ENCODE measurements at regions of chr16 and their contacts with region 1.

Region 1: DNA sequence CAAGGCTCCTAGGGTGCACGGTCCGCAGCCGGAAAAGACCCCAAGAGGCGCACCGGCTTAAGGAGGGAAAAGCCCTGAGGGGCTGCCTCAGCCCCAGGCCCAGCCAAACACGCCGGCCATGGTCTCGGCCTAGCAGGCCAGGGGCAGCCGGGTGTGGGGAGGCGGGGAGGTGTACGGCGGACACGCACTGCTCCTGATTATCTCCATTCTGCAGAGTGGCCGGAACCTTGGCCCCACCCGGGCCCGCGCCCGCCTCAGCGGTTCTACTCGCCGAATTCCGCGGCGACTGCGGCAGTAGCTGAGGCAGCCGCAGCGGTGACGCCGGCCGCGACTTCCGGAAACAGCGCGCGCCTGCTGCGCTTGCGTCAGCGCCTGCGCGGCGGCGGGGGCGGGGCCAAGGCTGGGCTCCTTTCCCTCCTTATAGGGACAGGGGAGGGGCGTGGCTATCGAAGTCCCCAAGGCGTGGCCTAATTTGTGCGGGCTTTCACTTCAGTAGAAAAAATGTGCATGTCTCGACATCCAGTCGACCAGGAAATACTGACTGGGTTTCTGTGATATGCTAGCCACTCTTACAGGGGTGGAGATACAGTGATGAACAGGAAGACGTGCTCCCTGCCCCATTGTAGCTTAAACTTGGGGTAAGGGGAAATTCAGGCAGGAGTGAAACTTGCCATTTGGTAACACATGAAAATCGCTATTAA is at the start of gene PARN:
- H3K4me3 ChIP-seq: peak within 1 kb of the TSS; percentile 71
- H3K27ac ChIP-seq: peak within 1 kb of the TSS; percentile 77
- H3K4me1 ChIP-seq: 0 out of 2 replicates have a peak, but pooled peaks cover 4% of the 10 kb centered on the region
- CTCF ChIP-seq: no peak

Region 2: GRCh38 chr16:14572535-14572934 is 57.5 kb before region 1 on chr16:
- CTCF ChIA-PET with region 1: no interaction called
- POLR2A ChIA-PET with region 1: no interaction called
- H3K4me3 ChIP-seq: no peak overlapping the region
- H3K27ac ChIP-seq: no peak overlapping the region
- H3K4me1 ChIP-seq: no peaks in the 10 kb centered on the region
- CTCF ChIP-seq: no peak

Region 3: DNA sequence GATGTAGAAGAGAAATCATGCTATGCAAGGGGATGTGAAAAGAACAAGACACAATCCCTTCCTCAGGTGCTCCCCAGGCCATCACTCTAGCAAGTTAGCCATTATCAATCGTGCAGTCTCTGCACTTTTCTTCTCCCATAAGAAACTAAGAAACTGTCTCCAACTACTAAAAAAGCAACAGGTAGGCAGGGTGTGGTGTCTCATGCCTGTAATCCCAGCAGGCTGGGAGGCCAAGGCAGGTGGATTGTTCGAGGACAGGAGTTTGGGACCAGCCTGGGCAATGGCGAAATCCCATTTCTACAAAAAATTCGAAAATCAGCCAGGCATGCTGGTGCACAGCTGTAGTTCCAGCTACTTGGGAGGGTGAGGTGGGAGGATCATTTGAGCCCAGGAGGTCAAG is 13.8 kb before region 1 on chr16:
- CTCF ChIA-PET with region 1: no interaction called
- POLR2A ChIA-PET with region 1: interaction called, 11 read pairs
- H3K4me3 ChIP-seq: no peak overlapping the region
- H3K27ac ChIP-seq: no peak overlapping the region
- H3K4me1 ChIP-seq: no peaks in the 10 kb centered on the region
- CTCF ChIP-seq: no peak